GM12878 (cell line): ENCODE measurements at regions of chrX and their contacts with region 1.

Region 1: DNA sequence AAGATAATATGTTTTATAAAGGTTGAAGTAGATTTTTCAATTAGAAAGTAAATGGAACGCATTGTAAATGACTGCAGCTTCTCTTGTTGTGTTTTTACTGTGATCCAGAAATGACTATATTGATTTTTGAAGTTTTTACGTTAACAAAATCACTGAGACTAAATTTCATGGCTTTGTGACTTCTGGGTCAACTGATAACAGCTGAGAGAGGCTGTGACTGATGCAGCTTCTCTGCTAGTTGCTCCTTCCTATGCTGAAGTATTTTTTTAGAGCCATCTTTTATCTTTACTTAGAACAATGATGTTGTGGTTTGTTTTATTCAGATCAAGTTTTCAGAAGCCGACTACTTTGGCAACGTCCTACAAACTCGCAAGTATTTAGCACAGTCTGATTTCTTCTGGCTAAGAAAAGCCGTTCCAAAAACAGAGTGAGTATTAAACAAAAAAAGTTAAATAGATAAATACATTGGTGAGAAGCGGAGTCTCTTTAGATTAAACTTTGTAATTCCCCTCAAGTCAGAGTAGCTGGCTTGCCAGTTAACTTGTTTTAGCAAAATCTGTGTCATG is 94.7 kb upstream of the CBLL2 start:
- DNase-seq: no peak
- ATAC-seq: peak; percentile 52
- H3K4me3 ChIP-seq: no peak overlapping the region
- H3K27ac ChIP-seq: no peak overlapping the region
- H3K4me1 ChIP-seq: no peaks in the 10 kb centered on the region
- H3K27me3 ChIP-seq: no peaks in the 10 kb centered on the region
- CTCF ChIP-seq: no peak
- EP300 ChIP-seq: no peak
- POLR2A ChIP-seq: no peak
- RAD21 ChIP-seq: no peak

Region 2: GRCh38 chrX:22192417-22193060 is 14.5 kb after region 1 on chrX:
- CTCF ChIA-PET with region 1: interaction called, 10 read pairs
- POLR2A ChIA-PET with region 1: interaction called, 4 read pairs
- RAD21 ChIA-PET with region 1: interaction called, 6 read pairs
- SMC1A ChIA-PET with region 1: interaction called, 5 read pairs
- in situ Hi-C with region 1: no loop called
- intact Hi-C with region 1: no loop called
- DNase-seq: peak; percentile 3
- ATAC-seq: peak; percentile 96
- H3K4me3 ChIP-seq: no peak overlapping the region
- H3K27ac ChIP-seq: no peak overlapping the region
- H3K4me1 ChIP-seq: no peaks in the 10 kb centered on the region
- H3K27me3 ChIP-seq: no peaks in the 10 kb centered on the region
- CTCF ChIP-seq: peak; percentile 73 to 82 (median 76)
- EP300 ChIP-seq: no peak
- POLR2A ChIP-seq: no peak
- RAD21 ChIP-seq: peak; percentile 58

Region 3: DNA sequence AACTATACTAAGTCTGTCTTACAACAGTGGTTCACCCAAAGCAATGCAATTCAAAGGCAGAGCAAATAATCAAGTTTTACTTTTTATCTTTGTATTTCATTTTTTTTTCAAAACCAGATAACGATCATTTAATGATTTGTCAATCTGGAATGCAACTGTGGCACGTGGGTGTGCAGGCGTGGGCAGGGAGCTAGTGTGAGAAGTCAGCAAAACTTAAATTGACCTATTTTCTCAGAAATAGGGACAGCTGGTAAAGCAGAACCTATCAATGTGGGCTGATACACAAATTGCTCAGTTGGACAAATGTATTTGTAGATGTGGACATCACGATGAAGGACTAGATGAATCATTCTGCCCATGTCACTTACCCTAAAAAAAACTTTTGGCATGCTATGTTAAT is 200.3 kb after region 1 on chrX:
- CTCF ChIA-PET with region 1: no interaction called
- POLR2A ChIA-PET with region 1: no interaction called
- RAD21 ChIA-PET with region 1: no interaction called
- SMC1A ChIA-PET with region 1: no interaction called
- in situ Hi-C with region 1: no loop called
- intact Hi-C with region 1: no loop called
- DNase-seq: no peak
- ATAC-seq: no peak
- H3K4me3 ChIP-seq: no peak overlapping the region
- H3K27ac ChIP-seq: no peak overlapping the region
- H3K4me1 ChIP-seq: no peaks in the 10 kb centered on the region
- H3K27me3 ChIP-seq: no peaks in the 10 kb centered on the region
- CTCF ChIP-seq: no peak
- EP300 ChIP-seq: no peak
- POLR2A ChIP-seq: no peak
- RAD21 ChIP-seq: no peak